ENCODE measurements at regions of chr14 and their contacts with region 1.

Region 1: GRCh38 chr14:20613094-20614037 is 22.2 kb upstream of the RNASE12 start:
- DNase-seq: peak; percentile 78 to 85
- ATAC-seq: peak; percentile 78 to 84 (median 80)
- H3K4me3 ChIP-seq: peak overlapping the region; percentile 74
- H3K27ac ChIP-seq: peak overlapping the region; percentile 62
- H3K4me1 ChIP-seq: peaks cover 29% of the 10 kb centered on the region
- H3K27me3 ChIP-seq: no peaks in the 10 kb centered on the region
- CTCF ChIP-seq: peak; percentile 68

Region 2: GRCh38 chr14:20327005-20327869 is 286.1 kb before region 1 on chr14:
- intact Hi-C with region 1: loop called in 1 of 2 experiments (anchors 2 kb)
- DNase-seq: no peak
- ATAC-seq: peak in 3 of 4 donors; percentile 57 to 84 (median 59)
- H3K4me3 ChIP-seq: no peak overlapping the region
- H3K27ac ChIP-seq: no peak overlapping the region
- H3K4me1 ChIP-seq: peaks cover 21% of the 10 kb centered on the region
- H3K27me3 ChIP-seq: no peaks in the 10 kb centered on the region
- CTCF ChIP-seq: peak; percentile 85

Region 3: GRCh38 chr14:20469242-20469889 is 144.0 kb before region 1 on chr14 and contains the start of gene PNP:
- intact Hi-C with region 1: loop called in 1 of 2 experiments (anchors 5 kb)
- DNase-seq: peak; percentile 85 to 89
- ATAC-seq: peak; percentile 88 to 93 (median 89)
- H3K4me3 ChIP-seq: peak within 1 kb of the TSS; percentile 78
- H3K27ac ChIP-seq: peak within 1 kb of the TSS; percentile 75
- H3K4me1 ChIP-seq: peaks cover 6% of the 10 kb centered on the region
- H3K27me3 ChIP-seq: no peaks in the 10 kb centered on the region
- CTCF ChIP-seq: no peak
- total RNA-seq, gene PNP: 3.7 to 13.3 (median 7.3) TPM

Region 4: GRCh38 chr14:20503898-20504297 is 109.5 kb before region 1 on chr14:
- intact Hi-C with region 1: no loop called
- DNase-seq: no peak
- ATAC-seq: no peak
- H3K4me3 ChIP-seq: no peak overlapping the region
- H3K27ac ChIP-seq: no peak overlapping the region
- H3K4me1 ChIP-seq: no peaks in the 10 kb centered on the region
- H3K27me3 ChIP-seq: no peaks in the 10 kb centered on the region
- CTCF ChIP-seq: no peak

Region 5: GRCh38 chr14:20652996-20653975 is 39.9 kb after region 1 on chr14:
- intact Hi-C with region 1: no loop called
- DNase-seq: no peak
- ATAC-seq: peak in 1 of 4 donors; percentile 42
- H3K4me3 ChIP-seq: no peak overlapping the region
- H3K27ac ChIP-seq: no peak overlapping the region
- H3K4me1 ChIP-seq: no peaks in the 10 kb centered on the region
- H3K27me3 ChIP-seq: peaks cover 0 to 89% (median 21%) of the 10 kb centered on the region in 3 donors
- CTCF ChIP-seq: no peak

Region 6: GRCh38 chr14:20682435-20683124 is 69.2 kb after region 1 on chr14:
- intact Hi-C with region 1: loop called in 1 of 2 experiments (anchors 1 kb)
- DNase-seq: peak; percentile 88 to 94
- ATAC-seq: peak; percentile 84 to 87 (median 86)
- H3K4me3 ChIP-seq: peak overlapping the region; percentile 89
- H3K27ac ChIP-seq: peak overlapping the region; percentile 99
- H3K4me1 ChIP-seq: peaks cover 17% of the 10 kb centered on the region
- H3K27me3 ChIP-seq: no peaks in the 10 kb centered on the region
- CTCF ChIP-seq: no peak

Region 7: DNA sequence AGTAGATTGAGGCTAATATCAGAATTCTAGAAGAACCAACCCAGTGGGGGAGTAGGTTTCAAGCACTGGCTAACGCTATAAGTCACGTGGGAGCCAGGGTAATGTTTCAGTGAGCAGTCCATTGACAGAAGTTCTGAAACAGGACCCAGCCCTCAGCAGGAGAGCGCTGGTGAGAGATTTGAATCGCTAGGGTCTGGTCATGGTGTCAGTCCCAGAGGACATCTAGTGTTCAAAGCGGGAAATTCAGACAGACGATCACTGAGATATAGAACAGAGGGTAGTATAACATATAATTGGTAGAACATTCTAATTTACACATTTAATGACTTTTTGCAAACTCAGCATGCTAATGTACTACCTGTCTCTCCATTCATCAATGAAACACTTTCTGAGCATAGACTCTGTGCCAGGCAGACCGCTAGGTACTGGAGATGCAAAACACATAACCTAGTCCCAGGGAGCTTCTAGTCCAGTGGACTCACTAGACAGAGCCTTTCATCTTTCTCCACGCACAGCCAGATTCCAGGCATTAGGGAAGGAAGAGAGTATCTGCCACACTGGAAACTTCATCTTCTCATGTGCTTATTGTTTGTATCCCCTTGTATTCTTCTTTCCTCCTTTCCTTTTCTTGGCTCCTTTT is 242.4 kb after region 1 on chr14:
- intact Hi-C with region 1: loop called in 1 of 2 experiments (anchors 5 kb)
- DNase-seq: peak in 1 of 2 donors; percentile 24
- ATAC-seq: peak; percentile 74 to 88 (median 80)
- H3K4me3 ChIP-seq: no peak overlapping the region
- H3K27ac ChIP-seq: no peak overlapping the region
- H3K4me1 ChIP-seq: no peaks in the 10 kb centered on the region
- H3K27me3 ChIP-seq: peaks cover 0 to 7% (median 0%) of the 10 kb centered on the region in 3 donors
- CTCF ChIP-seq: peak; percentile 67

Region 8: GRCh38 chr14:20970983-20971704 is 357.8 kb after region 1 on chr14:
- intact Hi-C with region 1: loop called in 1 of 2 experiments (anchors 10 kb)
- DNase-seq: peak; percentile 83 to 91
- ATAC-seq: peak; percentile 97 to 99 (median 98)
- H3K4me3 ChIP-seq: peak overlapping the region; percentile 75
- H3K27ac ChIP-seq: peak overlapping the region; percentile 53
- H3K4me1 ChIP-seq: peaks cover 4% of the 10 kb centered on the region
- H3K27me3 ChIP-seq: peaks cover 0 to 6% (median 2%) of the 10 kb centered on the region in 3 donors
- CTCF ChIP-seq: peak; percentile 85

Measured in psoas muscle (tissue), 8 donors.